ENCODE measurements at regions of chr3 and their contacts with region 1.

Region 1: GRCh38 chr3:23341147-23341838 is 138.2 kb downstream of the UBE2E2 start:
- DNase-seq: no peak
- ATAC-seq: peak; percentile 77
- H3K4me3 Mint-ChIP-seq: peak overlapping the region; percentile 39
- H3K27ac Mint-ChIP-seq: peak overlapping the region; percentile 74
- H3K4me1 Mint-ChIP-seq: peaks cover 59% of the 10 kb centered on the region
- H3K27me3 Mint-ChIP-seq: no peaks in the 10 kb centered on the region
- CTCF ChIP-seq: no peak

Region 2: GRCh38 chr3:23219117-23219516 is 122.2 kb before region 1 on chr3:
- CTCF ChIA-PET with region 1: no interaction called
- POLR2A ChIA-PET with region 1: no interaction called
- intact Hi-C with region 1: loop called (anchors 5 kb)
- DNase-seq: no peak
- ATAC-seq: no peak
- H3K4me3 Mint-ChIP-seq: no peak overlapping the region
- H3K27ac Mint-ChIP-seq: peak overlapping the region; percentile 32
- H3K4me1 Mint-ChIP-seq: peaks cover 61% of the 10 kb centered on the region
- H3K27me3 Mint-ChIP-seq: no peaks in the 10 kb centered on the region
- CTCF ChIP-seq: no peak

Region 3: GRCh38 chr3:23324745-23325144 is 16.5 kb before region 1 on chr3:
- CTCF ChIA-PET with region 1: no interaction called
- POLR2A ChIA-PET with region 1: interaction called, 3 read pairs
- intact Hi-C with region 1: loop called (anchors 1 kb)
- DNase-seq: no peak
- ATAC-seq: peak; percentile 77
- H3K4me3 Mint-ChIP-seq: peak overlapping the region; percentile 55
- H3K27ac Mint-ChIP-seq: peak overlapping the region; percentile 46
- H3K4me1 Mint-ChIP-seq: peaks cover 60% of the 10 kb centered on the region
- H3K27me3 Mint-ChIP-seq: no peaks in the 10 kb centered on the region
- CTCF ChIP-seq: no peak

Region 4: DNA sequence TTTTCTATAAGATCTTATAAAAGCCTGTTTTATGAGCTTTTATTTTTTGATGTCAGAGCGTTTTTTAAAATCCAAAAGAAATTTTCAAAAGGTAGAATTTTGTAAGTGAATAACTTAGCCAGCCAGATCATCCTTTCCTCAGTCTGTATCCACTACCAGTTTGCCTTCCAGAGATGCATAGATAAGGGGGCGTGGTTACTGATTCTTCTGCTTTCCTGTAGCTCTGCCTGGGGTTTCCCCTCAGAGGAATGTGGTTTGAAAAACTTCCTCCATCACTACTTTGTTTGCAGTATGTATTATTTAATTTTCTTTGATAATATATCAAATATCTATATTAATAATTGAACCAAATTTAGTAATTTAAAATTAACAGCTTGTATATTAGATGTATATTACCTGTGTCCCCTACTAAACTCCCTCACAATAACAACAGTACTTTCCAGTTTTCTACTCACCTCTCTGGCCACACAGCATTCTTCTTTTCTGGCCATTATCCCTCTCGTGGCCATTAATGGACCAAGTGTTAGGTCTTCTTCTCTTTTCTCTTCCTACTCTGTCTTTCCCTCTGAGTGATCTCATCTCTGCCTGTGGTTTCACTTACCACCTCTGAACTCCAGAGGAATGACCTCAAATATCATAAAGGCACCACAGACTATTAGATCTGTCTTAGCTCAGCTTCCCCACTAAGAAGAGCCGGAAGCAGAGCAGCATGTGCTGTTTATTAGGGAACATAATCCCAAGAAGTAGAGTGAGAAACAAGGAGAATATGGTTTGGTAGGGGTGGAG is 101.5 kb after region 1 on chr3:
- CTCF ChIA-PET with region 1: no interaction called
- POLR2A ChIA-PET with region 1: no interaction called
- intact Hi-C with region 1: loop called (anchors 5 kb)
- DNase-seq: no peak
- ATAC-seq: peak; percentile 88
- H3K4me3 Mint-ChIP-seq: peak overlapping the region; percentile 30
- H3K27ac Mint-ChIP-seq: no peak overlapping the region
- H3K4me1 Mint-ChIP-seq: peaks cover 71% of the 10 kb centered on the region
- H3K27me3 Mint-ChIP-seq: no peaks in the 10 kb centered on the region
- CTCF ChIP-seq: no peak

Measured in activated B cell treated with CpG ODN at 0.5 μM for 24 hours (primary cell).